Naive thymus-derived CD4-positive, alpha-beta T cell (primary cell): ENCODE measurements at regions of chr6 and their contacts with region 1.

Region 1: DNA sequence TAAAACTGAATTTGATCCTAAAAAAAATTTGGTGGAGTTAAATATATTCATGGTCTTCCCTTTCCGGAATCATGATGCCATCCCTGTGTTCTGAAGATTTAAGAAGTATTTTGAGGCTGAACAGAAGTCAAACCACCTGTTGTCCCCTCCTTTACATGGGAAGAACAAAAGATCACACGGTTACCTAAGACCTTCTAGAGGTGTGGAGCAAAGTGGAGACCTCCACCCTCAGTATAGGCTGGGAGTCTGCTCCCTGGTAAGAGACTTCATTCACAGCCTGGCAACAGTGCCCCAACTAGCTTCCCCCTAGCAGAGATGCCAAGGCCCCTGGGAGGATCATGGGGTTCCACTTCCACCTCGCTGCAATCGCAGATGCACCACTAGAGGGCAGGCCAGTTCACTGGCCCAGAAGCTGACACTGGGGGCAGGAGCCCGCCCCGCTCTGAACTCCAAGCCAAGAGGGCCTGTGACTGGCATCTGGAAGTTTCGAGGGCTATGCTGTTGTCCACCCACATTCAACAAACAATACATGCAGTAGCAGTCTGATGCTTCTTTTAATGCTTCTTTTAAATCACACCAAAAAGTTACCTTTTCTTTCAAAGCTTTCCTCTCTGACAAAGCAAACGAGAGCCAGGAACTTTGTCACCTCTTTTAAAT is 19.5 kb upstream of the UBE2J1 start:
- DNase-seq: peak; percentile 55 to 79 (median 68)
- ATAC-seq: peak; percentile 85
- H3K4me3 ChIP-seq: no peak overlapping the region
- H3K4me3 Mint-ChIP-seq: peak overlapping the region in 3 of 10 donors; percentile 13 to 49 (median 29)
- H3K27ac ChIP-seq: no peak overlapping the region
- H3K27ac Mint-ChIP-seq: peak overlapping the region in 5 of 9 donors; percentile 39 to 87 (median 59)
- H3K4me1 ChIP-seq: peaks cover 6 to 8% of the 10 kb centered on the region in 2 donors
- H3K4me1 Mint-ChIP-seq: peaks cover 0 to 42% (median 9%) of the 10 kb centered on the region in 7 donors
- H3K27me3 ChIP-seq: no peaks in the 10 kb centered on the region
- H3K27me3 Mint-ChIP-seq: no peaks in the 10 kb centered on the region

Region 2: DNA sequence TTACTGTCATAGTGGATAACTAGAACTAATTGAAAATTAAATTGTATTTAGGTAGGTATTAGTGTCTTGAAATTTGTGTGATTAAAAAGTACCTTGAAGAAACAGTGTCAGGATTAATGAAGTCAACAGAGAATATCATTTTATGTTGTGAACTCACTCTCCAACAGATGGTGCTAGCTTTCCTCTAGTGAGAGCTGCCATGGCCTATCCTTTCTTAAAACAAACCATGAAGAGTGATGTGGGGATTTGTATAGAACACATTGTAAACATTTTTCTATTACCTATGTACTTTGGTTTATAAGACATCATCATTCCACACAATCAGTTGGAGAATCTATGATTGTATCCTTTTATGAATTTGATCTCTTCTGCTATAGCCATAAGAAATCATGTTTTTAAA is 249.4 kb before region 1 on chr6:
- CTCF ChIA-PET with region 1: interaction called, 6 read pairs
- POLR2A ChIA-PET with region 1: no interaction called
- intact Hi-C with region 1: loop called (anchors 1 kb)
- DNase-seq: peak in 4 of 9 donors; percentile 8 to 36 (median 26)
- ATAC-seq: peak; percentile 58
- H3K4me3 ChIP-seq: no peak overlapping the region
- H3K4me3 Mint-ChIP-seq: no peak overlapping the region
- H3K27ac ChIP-seq: no peak overlapping the region
- H3K27ac Mint-ChIP-seq: no peak overlapping the region
- H3K4me1 ChIP-seq: no peaks in the 10 kb centered on the region
- H3K4me1 Mint-ChIP-seq: peaks cover 0 to 6% (median 3%) of the 10 kb centered on the region in 7 donors
- H3K27me3 ChIP-seq: no peaks in the 10 kb centered on the region
- H3K27me3 Mint-ChIP-seq: peaks cover 0 to 31% (median 0%) of the 10 kb centered on the region in 5 donors

Region 3: DNA sequence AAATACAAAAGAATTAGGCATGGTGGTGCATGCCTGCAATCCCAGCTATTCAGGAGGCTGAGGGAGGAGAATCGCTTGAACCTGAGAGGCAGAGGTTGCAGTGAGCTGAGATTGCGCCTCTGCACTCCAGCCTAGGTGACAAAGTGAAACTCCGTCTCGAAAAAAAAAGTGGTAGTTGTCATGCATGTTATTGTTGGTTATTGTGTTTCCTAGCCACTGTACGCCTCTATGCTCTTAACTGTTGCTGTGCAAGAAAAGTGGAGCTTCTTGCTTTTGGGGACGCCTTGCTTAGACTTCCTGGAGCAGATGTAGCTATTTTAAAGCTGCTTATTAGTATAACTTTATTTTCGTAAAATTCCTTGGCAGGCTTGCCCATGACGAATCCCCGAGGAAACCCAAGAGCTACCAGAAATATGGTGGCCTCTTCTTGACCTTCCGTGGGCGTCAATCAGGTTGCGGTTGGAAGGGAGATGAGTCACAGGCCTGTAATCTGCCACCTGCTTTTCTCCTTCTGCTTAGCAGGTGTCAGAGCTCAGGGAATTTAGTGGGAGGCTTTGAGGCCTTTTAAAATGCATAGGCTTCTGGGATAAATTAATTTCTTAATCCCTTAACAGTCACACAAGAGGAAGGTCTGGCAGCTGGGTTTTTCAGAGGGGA is 74.2 kb before region 1 on chr6:
- CTCF ChIA-PET with region 1: no interaction called
- POLR2A ChIA-PET with region 1: no interaction called
- intact Hi-C with region 1: loop called in 1 of 2 experiments (anchors 2 kb)
- DNase-seq: peak in 4 of 9 donors; percentile 19 to 72 (median 24)
- ATAC-seq: peak; percentile 78
- H3K4me3 ChIP-seq: no peak overlapping the region
- H3K4me3 Mint-ChIP-seq: peak overlapping the region in 9 of 10 donors; percentile 12 to 69 (median 34)
- H3K27ac ChIP-seq: no peak overlapping the region
- H3K27ac Mint-ChIP-seq: peak overlapping the region; percentile 15 to 95 (median 63)
- H3K4me1 ChIP-seq: peaks cover 16 to 17% of the 10 kb centered on the region in 2 donors
- H3K4me1 Mint-ChIP-seq: peaks cover 13 to 22% (median 18%) of the 10 kb centered on the region in 7 donors
- H3K27me3 ChIP-seq: no peaks in the 10 kb centered on the region
- H3K27me3 Mint-ChIP-seq: no peaks in the 10 kb centered on the region

Region 4: GRCh38 chr6:89360415-89360999 is 11.5 kb before region 1 on chr6:
- CTCF ChIA-PET with region 1: interaction called, 26 read pairs
- POLR2A ChIA-PET with region 1: interaction called, 3 read pairs
- intact Hi-C with region 1: loop called (anchors 1 kb)
- DNase-seq: no peak
- ATAC-seq: peak; percentile 48
- H3K4me3 ChIP-seq: no peak overlapping the region
- H3K4me3 Mint-ChIP-seq: peak overlapping the region in 2 of 10 donors; percentile 5 to 10
- H3K27ac ChIP-seq: no peak overlapping the region
- H3K27ac Mint-ChIP-seq: peak overlapping the region in 6 of 9 donors; percentile 4 to 35 (median 15)
- H3K4me1 ChIP-seq: peaks cover 12 to 26% of the 10 kb centered on the region in 2 donors
- H3K4me1 Mint-ChIP-seq: peaks cover 22 to 68% (median 56%) of the 10 kb centered on the region in 7 donors
- H3K27me3 ChIP-seq: no peaks in the 10 kb centered on the region
- H3K27me3 Mint-ChIP-seq: no peaks in the 10 kb centered on the region

Region 5: DNA sequence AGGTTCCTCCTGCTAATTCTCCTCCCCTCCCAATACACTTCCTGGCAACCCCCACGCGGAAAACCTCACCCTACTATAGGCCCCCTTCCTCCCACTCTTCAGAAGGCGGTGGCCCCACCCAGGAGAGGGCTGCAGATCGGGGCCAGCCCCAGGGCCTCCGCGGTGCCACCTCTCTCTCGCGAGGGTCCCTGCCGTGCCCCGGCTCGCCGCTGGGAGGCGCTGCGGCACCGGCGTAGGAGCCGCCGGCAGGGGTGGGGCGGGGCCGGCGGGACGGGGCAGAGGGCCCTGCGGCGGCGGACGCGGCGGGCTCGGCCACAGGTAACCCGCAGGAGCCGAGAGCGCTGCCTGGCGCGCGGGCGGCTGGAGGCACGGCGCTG is 60.9 kb after region 1 on chr6 and contains the start of gene ANKRD6:
- CTCF ChIA-PET with region 1: interaction called, 6 read pairs
- POLR2A ChIA-PET with region 1: no interaction called
- intact Hi-C with region 1: loop called (anchors 1 to 2 kb)
- DNase-seq: peak; percentile 61 to 96 (median 81)
- ATAC-seq: peak; percentile 98
- H3K4me3 ChIP-seq: peak within 1 kb of the TSS; percentile 63
- H3K4me3 Mint-ChIP-seq: peak within 1 kb of the TSS; percentile 83 to 95 (median 90)
- H3K27ac ChIP-seq: peak within 1 kb of the TSS; percentile 46
- H3K27ac Mint-ChIP-seq: peak within 1 kb of the TSS; percentile 43 to 93 (median 82)
- H3K4me1 ChIP-seq: peaks cover 7 to 13% of the 10 kb centered on the region in 2 donors
- H3K4me1 Mint-ChIP-seq: peaks cover 9 to 36% (median 22%) of the 10 kb centered on the region in 7 donors
- H3K27me3 ChIP-seq: no peaks in the 10 kb centered on the region
- H3K27me3 Mint-ChIP-seq: peaks cover 0 to 58% (median 0%) of the 10 kb centered on the region in 5 donors
- total RNA-seq, gene ANKRD6: 3.1 to 6.6 (median 3.8) TPM

Region 6: DNA sequence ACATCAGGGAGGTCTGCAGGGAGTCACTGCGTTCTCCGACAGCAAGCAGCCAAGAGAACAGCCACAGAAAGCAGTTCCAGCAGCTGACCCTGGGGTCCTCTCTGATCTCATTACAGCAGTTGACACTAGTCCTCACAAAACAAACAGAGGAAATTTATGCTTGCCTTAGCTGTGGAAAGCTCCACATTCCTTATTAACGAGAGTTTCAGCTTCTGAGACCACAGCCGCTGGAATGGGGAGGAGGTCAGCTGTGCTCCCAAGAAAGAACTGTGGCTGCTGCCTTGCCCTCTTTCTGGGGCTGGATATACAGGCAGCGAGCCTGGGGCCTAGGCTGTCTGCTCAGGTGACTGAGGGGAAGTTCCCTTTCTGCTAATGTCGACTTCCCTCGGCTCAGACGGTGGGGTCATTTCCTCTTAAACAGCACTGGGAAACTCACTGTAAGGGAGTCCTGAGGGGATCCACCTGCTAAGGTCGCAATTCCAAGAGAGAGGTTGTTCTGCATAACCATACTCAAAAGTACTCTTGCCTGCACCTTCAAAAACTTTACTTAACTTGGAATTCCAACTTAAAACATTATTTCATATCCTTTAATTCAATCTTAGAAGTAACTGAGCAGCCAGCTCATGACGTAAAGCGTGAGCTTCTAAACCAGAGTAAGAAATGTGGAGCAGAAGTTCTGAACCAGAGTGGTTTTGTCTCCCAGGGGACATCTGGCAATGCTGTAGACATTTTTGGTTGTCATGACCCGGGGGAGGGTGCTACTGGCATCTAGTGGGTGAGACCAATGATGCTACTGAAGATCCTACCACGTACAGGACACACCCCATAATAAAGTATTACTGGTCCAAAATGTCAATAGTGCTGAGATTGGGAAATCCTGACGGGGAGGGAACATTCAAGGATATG is 844.3 kb after region 1 on chr6:
- CTCF ChIA-PET with region 1: no interaction called
- POLR2A ChIA-PET with region 1: no interaction called
- intact Hi-C with region 1: loop called in 1 of 2 experiments (anchors 10 kb)
- DNase-seq: peak in 5 of 9 donors; percentile 61 to 82 (median 63)
- ATAC-seq: peak; percentile 69
- H3K4me3 ChIP-seq: peak overlapping the region; percentile 18
- H3K4me3 Mint-ChIP-seq: peak overlapping the region in 7 of 10 donors; percentile 42 to 74 (median 68)
- H3K27ac ChIP-seq: peak overlapping the region; percentile 85
- H3K27ac Mint-ChIP-seq: no peak overlapping the region
- H3K4me1 ChIP-seq: peaks cover 0 to 97% of the 10 kb centered on the region in 2 donors
- H3K4me1 Mint-ChIP-seq: peaks cover 0 to 33% (median 31%) of the 10 kb centered on the region in 7 donors
- H3K27me3 ChIP-seq: no peaks in the 10 kb centered on the region
- H3K27me3 Mint-ChIP-seq: no peaks in the 10 kb centered on the region